ENCODE measurements at regions of chr3 and their contacts with region 1.

Region 1: GRCh38 chr3:141738022-141738890 is at the start of gene RNF7:
- DNase-seq: peak; percentile 49
- H3K4me3 ChIP-seq: peak within 1 kb of the TSS; percentile 98
- CTCF ChIP-seq: peak; percentile 79

Region 2: DNA sequence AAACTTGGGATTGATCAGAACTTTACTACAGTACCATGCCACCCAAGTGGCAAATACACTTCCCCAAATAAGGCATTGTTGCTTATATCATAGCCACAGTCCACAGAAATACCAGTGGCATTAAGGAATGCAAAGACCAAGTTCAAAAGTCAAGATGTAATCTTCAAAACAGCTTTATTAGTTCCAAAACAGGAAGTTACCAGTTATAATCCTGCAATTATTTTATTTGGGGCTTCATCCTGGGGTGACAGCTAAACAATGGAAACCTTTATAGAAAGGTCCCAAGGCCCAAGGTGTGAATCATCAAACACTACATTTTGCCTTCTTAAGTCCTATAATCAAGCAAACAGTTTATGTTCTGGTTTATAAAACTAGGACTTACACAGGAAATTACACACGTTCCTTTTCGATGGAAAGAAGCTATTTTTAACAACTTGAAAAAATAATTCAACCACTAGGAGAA is 30.5 kb before region 1 on chr3:
- CTCF ChIA-PET with region 1: interaction called, 11 read pairs
- POLR2A ChIA-PET with region 1: no interaction called
- DNase-seq: peak; percentile 57
- H3K4me3 ChIP-seq: no peak overlapping the region
- CTCF ChIP-seq: no peak

Region 3: DNA sequence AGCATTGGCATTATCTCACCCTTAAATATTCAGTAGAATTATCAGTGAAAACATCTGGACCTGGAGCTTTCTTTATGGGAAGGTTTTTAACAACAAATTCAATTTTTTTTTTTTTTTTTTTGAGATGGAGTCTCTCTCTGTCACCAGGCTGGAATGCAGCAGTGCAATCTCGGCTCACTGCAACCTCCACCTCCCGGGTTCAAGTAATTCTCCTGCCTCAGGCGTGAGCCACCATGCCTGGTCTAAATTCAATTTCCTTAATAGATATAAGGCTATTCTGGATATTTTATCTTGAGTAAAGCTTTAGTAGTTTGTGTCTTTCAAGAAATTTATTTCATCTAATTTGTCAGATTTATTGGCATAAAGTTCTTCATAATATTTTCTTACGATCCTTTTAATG is 22.8 kb before region 1 on chr3:
- CTCF ChIA-PET with region 1: interaction called, 11 read pairs
- POLR2A ChIA-PET with region 1: no interaction called
- DNase-seq: no peak
- H3K4me3 ChIP-seq: no peak overlapping the region
- CTCF ChIP-seq: no peak

Region 4: GRCh38 chr3:141754032-141754431 is 15.8 kb after region 1 on chr3:
- CTCF ChIA-PET with region 1: interaction called, 15 read pairs
- POLR2A ChIA-PET with region 1: interaction called, 3 read pairs
- DNase-seq: no peak
- H3K4me3 ChIP-seq: no peak overlapping the region
- CTCF ChIP-seq: no peak

Region 5: DNA sequence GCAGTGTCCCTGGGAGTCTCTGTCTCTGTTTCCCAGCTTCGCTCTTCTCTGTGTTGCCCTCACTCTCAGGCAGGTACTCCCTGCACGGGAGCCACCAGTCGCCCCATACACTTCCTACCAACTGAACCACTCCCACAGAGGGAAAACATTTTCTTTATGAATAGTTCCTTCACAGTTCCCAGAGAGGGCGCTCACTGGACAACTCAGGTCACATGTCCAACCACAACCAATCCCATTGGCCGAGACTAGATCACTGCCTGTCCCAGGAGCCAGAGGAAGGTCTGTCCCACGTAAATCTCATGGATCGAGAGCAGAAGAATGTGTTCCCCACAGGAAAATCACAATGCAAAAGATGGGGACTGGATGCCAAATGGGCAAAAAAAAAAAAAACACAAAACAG is 51.0 kb after region 1 on chr3:
- CTCF ChIA-PET with region 1: no interaction called
- POLR2A ChIA-PET with region 1: no interaction called
- DNase-seq: no peak
- H3K4me3 ChIP-seq: no peak overlapping the region
- CTCF ChIP-seq: no peak

Measured in AG04449 (cell line).